ENCODE measurements at regions of chr3 and their contacts with region 1.

Region 1: GRCh38 chr3:35664460-35664919 is 25.2 kb downstream of the ARPP21 start:
- DNase-seq: peak; percentile 14
- ATAC-seq: peak; percentile 28
- H3K4me3 Mint-ChIP-seq: no peak overlapping the region
- H3K27ac Mint-ChIP-seq: no peak overlapping the region
- H3K4me1 Mint-ChIP-seq: peaks cover 6% of the 10 kb centered on the region
- H3K27me3 Mint-ChIP-seq: no peaks in the 10 kb centered on the region
- CTCF ChIP-seq: no peak

Region 2: GRCh38 chr3:33883538-33883950 is 1780.9 kb before region 1 on chr3:
- CTCF ChIA-PET with region 1: no interaction called
- POLR2A ChIA-PET with region 1: no interaction called
- intact Hi-C with region 1: loop called (anchors 5 kb)
- DNase-seq: no peak
- ATAC-seq: no peak
- H3K4me3 Mint-ChIP-seq: no peak overlapping the region
- H3K27ac Mint-ChIP-seq: no peak overlapping the region
- H3K4me1 Mint-ChIP-seq: peaks cover 4% of the 10 kb centered on the region
- H3K27me3 Mint-ChIP-seq: peaks cover 3% of the 10 kb centered on the region
- CTCF ChIP-seq: peak; percentile 95

Region 3: GRCh38 chr3:35633332-35634124 is 31.0 kb before region 1 on chr3:
- CTCF ChIA-PET with region 1: no interaction called
- POLR2A ChIA-PET with region 1: interaction called, 10 read pairs
- intact Hi-C with region 1: no loop called
- DNase-seq: no peak
- ATAC-seq: no peak
- H3K4me3 Mint-ChIP-seq: no peak overlapping the region
- H3K27ac Mint-ChIP-seq: no peak overlapping the region
- H3K4me1 Mint-ChIP-seq: no peaks in the 10 kb centered on the region
- H3K27me3 Mint-ChIP-seq: peaks cover 8% of the 10 kb centered on the region
- CTCF ChIP-seq: no peak

Region 4: GRCh38 chr3:35817216-35817615 is 152.7 kb after region 1 on chr3:
- CTCF ChIA-PET with region 1: no interaction called
- POLR2A ChIA-PET with region 1: no interaction called
- intact Hi-C with region 1: no loop called
- DNase-seq: no peak
- ATAC-seq: no peak
- H3K4me3 Mint-ChIP-seq: no peak overlapping the region
- H3K27ac Mint-ChIP-seq: no peak overlapping the region
- H3K4me1 Mint-ChIP-seq: no peaks in the 10 kb centered on the region
- H3K27me3 Mint-ChIP-seq: no peaks in the 10 kb centered on the region
- CTCF ChIP-seq: no peak

Measured in activated B cell treated with CpG ODN at 0.5 μM for 24 hours (primary cell).